ENCODE measurements at regions of chr11 and their contacts with region 1.

Region 1: GRCh38 chr11:6603287-6604080 is at the starts of genes ILK and RRP8:
- DNase-seq: peak; percentile 88 to 93 (median 90)
- H3K4me3 ChIP-seq: peak within 1 kb of the TSS; percentile 96
- H3K27ac ChIP-seq: peak within 1 kb of the TSS; percentile 82 to 83
- H3K4me1 ChIP-seq: peaks cover 19% of the 10 kb centered on the region
- H3K27me3 ChIP-seq: no peaks in the 10 kb centered on the region
- CTCF ChIP-seq: peak in 2 of 3 donors; percentile 47 to 56
- EP300 ChIP-seq: no peak
- POLR2A ChIP-seq: peak; percentile 85
- total RNA-seq, gene ILK: 79.8 to 222 (median 140) TPM
- total RNA-seq, gene RRP8: 8.2 to 25.5 (median 17.1) TPM

Region 2: DNA sequence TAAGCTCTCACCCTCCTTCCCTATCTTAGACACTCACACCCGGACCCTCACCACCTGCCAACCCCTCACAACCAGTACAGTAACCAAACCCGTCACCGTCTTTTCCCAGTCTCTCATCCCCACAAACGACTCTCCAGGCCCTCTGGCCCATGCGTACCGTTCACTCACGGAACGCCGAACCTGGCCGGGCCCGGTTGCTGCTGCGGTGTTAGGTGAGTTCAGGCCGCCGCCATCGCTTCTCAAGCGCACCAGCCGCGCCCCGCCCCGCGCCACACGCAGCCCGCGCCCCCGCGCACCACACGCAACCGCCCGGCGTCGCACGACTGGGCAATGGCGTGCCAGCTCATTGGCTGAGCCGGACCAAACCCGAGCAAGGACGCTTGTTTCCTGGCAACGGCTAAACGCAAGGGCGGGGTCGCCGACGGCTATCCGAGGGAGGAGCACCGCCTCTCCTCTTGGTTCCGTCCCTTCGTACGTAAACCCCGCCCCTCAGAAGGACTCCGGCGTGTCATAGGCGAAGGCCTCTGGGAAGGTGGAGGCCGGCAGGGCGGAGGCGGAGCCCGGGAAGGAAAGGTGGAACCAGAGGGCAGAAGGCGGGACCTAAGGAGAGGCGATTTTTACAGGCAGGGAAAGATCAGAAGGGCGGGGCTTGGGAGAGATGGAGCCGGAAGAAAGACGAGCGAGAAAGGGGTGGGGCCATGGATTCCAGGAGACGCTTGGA is 368.9 kb before region 1 on chr11 and contains the start of gene FHIP1B:
- intact Hi-C with region 1: loop called in 1 of 4 experiments (anchors 5 kb)
- DNase-seq: peak; percentile 99 to 100 (median 99)
- H3K4me3 ChIP-seq: peak within 1 kb of the TSS; percentile 88
- H3K27ac ChIP-seq: peak within 1 kb of the TSS; percentile 53 to 82
- H3K4me1 ChIP-seq: peaks cover 4% of the 10 kb centered on the region
- H3K27me3 ChIP-seq: no peaks in the 10 kb centered on the region
- CTCF ChIP-seq: no peak
- EP300 ChIP-seq: no peak
- POLR2A ChIP-seq: peak; percentile 61
- total RNA-seq, gene FHIP1B: 26.9 to 59.1 (median 35.7) TPM

Region 3: GRCh38 chr11:6389921-6390724 is 213.4 kb before region 1 on chr11 and contains the start of gene SMPD1:
- intact Hi-C with region 1: loop called in 1 of 4 experiments (anchors 5 kb)
- DNase-seq: peak; percentile 88 to 92 (median 90)
- H3K4me3 ChIP-seq: peak within 1 kb of the TSS; percentile 65
- H3K27ac ChIP-seq: peak within 1 kb of the TSS; percentile 73 to 77
- H3K4me1 ChIP-seq: peaks cover 3% of the 10 kb centered on the region
- H3K27me3 ChIP-seq: no peaks in the 10 kb centered on the region
- CTCF ChIP-seq: no peak
- EP300 ChIP-seq: no peak
- POLR2A ChIP-seq: no peak
- total RNA-seq, gene SMPD1: 12.9 to 35.4 (median 30.7) TPM

Region 4: DNA sequence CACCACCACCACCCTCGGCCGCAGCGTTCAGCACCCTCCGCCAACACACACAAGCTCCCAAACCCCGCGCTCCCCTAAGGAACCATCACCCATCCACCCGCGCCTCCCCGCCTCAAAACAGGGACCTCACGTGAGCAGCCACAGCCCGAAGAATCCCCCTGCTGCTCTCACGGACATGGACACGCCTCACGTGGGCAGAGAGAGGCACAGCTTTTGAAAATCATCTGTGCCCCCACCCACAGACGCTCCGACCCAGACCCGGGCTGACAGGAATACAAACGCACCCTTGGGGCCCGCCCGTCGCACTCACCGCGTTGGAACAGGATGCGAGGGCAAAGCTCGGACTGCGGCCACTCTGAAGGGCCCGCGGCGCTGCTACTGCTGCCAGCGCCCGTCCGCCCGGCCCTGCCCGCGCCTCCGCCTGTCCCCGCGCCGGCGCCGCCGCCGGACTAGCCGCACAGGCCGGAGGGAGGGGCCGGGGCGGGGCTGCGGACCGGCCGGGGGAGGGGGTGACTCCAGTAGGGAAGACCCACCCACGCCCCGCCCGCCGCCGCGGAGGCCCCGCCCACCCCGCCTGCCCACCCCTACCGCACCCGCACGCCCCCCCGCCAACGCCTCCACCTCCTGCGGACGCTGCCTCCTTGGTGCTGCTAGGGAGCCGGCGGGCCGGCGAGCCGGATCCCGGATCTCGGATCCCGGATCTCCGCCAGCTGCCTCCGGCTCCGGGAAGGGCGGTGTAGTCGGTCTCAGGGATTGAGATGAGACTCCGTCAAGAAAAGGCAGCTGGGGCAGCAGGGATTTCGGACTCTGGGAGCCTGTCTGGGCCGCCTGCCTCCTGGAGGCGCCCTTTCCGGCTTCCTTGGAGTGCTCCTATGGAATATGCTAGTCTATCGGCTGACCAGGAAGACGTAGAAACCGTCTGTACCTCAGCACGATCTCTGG is 129.7 kb before region 1 on chr11 and contains the start of gene TRIM3:
- intact Hi-C with region 1: loop called in 1 of 4 experiments (anchors 10 kb)
- DNase-seq: peak; percentile 94 to 97 (median 95)
- H3K4me3 ChIP-seq: peak within 1 kb of the TSS; percentile 68
- H3K27ac ChIP-seq: peak within 1 kb of the TSS; percentile 50 to 80
- H3K4me1 ChIP-seq: peaks cover 7% of the 10 kb centered on the region
- H3K27me3 ChIP-seq: no peaks in the 10 kb centered on the region
- CTCF ChIP-seq: peak in 1 of 3 donors; percentile 15
- EP300 ChIP-seq: no peak
- POLR2A ChIP-seq: peak; percentile 77
- total RNA-seq, gene TRIM3: 9.7 to 27.4 (median 19.7) TPM

Region 5: GRCh38 chr11:6682936-6683861 is 79.7 kb after region 1 on chr11 and contains the start of gene MRPL17:
- intact Hi-C with region 1: loop called (anchors 5 to 10 kb)
- DNase-seq: peak; percentile 99 to 100 (median 99)
- H3K4me3 ChIP-seq: peak within 1 kb of the TSS; percentile 92
- H3K27ac ChIP-seq: peak within 1 kb of the TSS; percentile 84 to 89
- H3K4me1 ChIP-seq: peaks cover 4% of the 10 kb centered on the region
- H3K27me3 ChIP-seq: no peaks in the 10 kb centered on the region
- CTCF ChIP-seq: peak; percentile 92 to 95 (median 95)
- EP300 ChIP-seq: no peak
- POLR2A ChIP-seq: peak; percentile 48
- total RNA-seq, gene MRPL17: 23.0 to 37.9 (median 30.7) TPM

Measured in ovary (tissue), 10 donors.